T-cell (primary cell): ENCODE measurements at regions of chr9 and their contacts with region 1.

Region 1: DNA sequence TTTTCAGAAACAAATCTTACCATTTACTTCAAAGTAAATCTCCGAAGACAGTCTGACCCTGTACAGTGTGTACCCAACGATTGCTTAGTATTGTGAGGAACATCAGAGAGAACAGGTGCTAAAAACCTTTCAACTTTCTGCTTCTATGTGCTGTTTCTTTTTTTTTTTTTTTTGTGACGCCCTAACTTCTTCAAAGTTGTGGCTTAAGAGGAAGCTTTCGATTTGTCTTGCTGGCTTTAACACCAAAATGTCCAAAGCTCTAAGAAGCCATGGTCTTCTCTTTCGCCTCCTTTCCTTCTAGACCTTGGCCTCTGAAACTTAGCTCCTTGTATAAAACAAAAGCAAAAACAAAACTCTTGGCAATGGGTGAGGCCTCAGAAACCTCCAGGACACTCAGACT is 1.2 kb downstream of the TNFSF8 start:
- DNase-seq: peak in 13 of 35 experiments; percentile 6 to 68 (median 23)
- ATAC-seq: peak; percentile 44 to 84 (median 55)
- H3K4me3 ChIP-seq: peak overlapping the region; percentile 65 to 72
- H3K4me3 Mint-ChIP-seq: peak overlapping the region; percentile 88 to 91 (median 90)
- H3K27ac ChIP-seq: peak overlapping the region; percentile 93
- H3K27ac Mint-ChIP-seq: peak overlapping the region; percentile 95 to 96
- H3K4me1 ChIP-seq: peaks cover 26 to 36% of the 10 kb centered on the region in 2 experiments
- H3K4me1 Mint-ChIP-seq: peaks cover 63 to 66% (median 64%) of the 10 kb centered on the region in 3 donors
- H3K27me3 ChIP-seq: no peaks in the 10 kb centered on the region
- H3K27me3 Mint-ChIP-seq: no peaks in the 10 kb centered on the region

Region 2: GRCh38 chr9:114898741-114899140 is 30.5 kb before region 1 on chr9:
- CTCF ChIA-PET with region 1: interaction called in 1 of 2 experiments, 20 read pairs
- POLR2A ChIA-PET with region 1: interaction called, 9 to 13 read pairs
- DNase-seq: peak; percentile 65 to 91 (median 82)
- ATAC-seq: peak; percentile 94 to 97 (median 97)
- H3K4me3 ChIP-seq: peak overlapping the region in 1 of 2 donors; percentile 4
- H3K4me3 Mint-ChIP-seq: no peak overlapping the region
- H3K27ac ChIP-seq: peak overlapping the region; percentile 68
- H3K27ac Mint-ChIP-seq: no peak overlapping the region
- H3K4me1 ChIP-seq: peaks cover 38 to 83% of the 10 kb centered on the region in 2 experiments
- H3K4me1 Mint-ChIP-seq: peaks cover 0 to 24% (median 23%) of the 10 kb centered on the region in 3 donors
- H3K27me3 ChIP-seq: no peaks in the 10 kb centered on the region
- H3K27me3 Mint-ChIP-seq: no peaks in the 10 kb centered on the region

Region 3: DNA sequence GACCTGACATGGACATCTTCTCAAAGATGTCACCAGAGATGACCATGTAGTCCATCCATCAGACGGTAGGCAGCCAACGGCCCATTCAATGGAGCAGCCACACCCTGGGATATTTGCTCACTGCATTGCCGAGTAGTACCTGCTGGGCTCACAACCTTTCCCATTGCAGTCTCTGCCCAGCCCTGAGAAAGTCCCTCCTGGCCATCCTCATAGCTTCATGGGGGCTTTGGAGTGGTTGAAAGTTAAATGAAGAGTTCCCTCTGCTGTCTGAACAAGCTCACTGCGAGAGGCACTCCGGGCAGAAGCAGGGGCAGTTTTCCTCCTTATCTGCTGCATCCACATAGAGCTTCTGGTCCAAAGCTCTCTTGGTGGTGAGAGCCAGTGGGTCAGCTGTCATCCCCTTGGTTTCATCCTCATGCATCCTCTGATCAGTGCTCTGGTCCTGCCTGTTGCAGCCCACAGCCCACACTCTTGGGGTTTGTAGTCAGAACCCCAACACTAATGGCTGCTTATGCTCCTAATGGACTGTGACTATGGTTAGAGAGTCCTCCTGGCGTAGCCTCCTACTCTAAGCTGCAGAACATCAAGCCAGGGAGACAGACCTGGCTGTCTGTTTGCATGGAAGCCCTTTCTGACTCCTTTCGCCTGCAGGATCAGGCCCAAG is 22.2 kb before region 1 on chr9:
- CTCF ChIA-PET with region 1: interaction called in 1 of 2 experiments, 10 read pairs
- POLR2A ChIA-PET with region 1: interaction called, 3 to 8 read pairs
- DNase-seq: peak in 3 of 35 experiments; percentile 23 to 59 (median 35)
- ATAC-seq: peak in 2 of 4 experiments; percentile 19 to 26
- H3K4me3 ChIP-seq: no peak overlapping the region
- H3K4me3 Mint-ChIP-seq: peak overlapping the region in 1 of 3 donors; percentile 75
- H3K27ac ChIP-seq: peak overlapping the region; percentile 81
- H3K27ac Mint-ChIP-seq: peak overlapping the region; percentile 98
- H3K4me1 ChIP-seq: peaks cover 24 to 71% of the 10 kb centered on the region in 2 experiments
- H3K4me1 Mint-ChIP-seq: peaks cover 53 to 64% (median 58%) of the 10 kb centered on the region in 3 donors
- H3K27me3 ChIP-seq: no peaks in the 10 kb centered on the region
- H3K27me3 Mint-ChIP-seq: no peaks in the 10 kb centered on the region

Region 4: DNA sequence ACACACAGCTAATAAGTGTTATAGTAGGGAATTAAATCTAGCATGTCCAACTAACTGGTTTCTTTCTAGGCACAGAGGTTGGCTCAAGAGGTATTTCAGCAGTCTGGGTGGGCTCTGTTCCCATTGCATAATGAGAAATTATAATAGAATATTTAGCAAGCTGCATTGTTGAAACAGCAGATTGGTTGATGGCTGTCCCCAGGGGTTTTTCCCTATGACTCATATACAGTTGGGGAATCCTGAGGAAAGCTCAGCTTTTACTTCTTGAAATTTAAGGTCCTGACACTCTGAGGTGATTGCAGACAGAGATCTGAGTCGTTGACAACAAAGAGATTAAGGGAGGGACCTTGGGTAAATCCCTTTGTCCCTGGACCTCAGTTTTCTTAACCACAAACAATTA is 39.5 kb after region 1 on chr9:
- CTCF ChIA-PET with region 1: interaction called in 1 of 2 experiments, 4 read pairs
- POLR2A ChIA-PET with region 1: interaction called in 1 of 2 experiments, 10 read pairs
- DNase-seq: peak in 1 of 35 experiments; percentile 34
- ATAC-seq: peak in 3 of 4 experiments; percentile 23 to 67 (median 30)
- H3K4me3 ChIP-seq: no peak overlapping the region
- H3K4me3 Mint-ChIP-seq: peak overlapping the region in 1 of 3 donors; percentile 2
- H3K27ac ChIP-seq: no peak overlapping the region
- H3K27ac Mint-ChIP-seq: no peak overlapping the region
- H3K4me1 ChIP-seq: peaks cover 3 to 6% of the 10 kb centered on the region in 2 experiments
- H3K4me1 Mint-ChIP-seq: peaks cover 18 to 25% (median 24%) of the 10 kb centered on the region in 3 donors
- H3K27me3 ChIP-seq: no peaks in the 10 kb centered on the region
- H3K27me3 Mint-ChIP-seq: peaks cover 0 to 3% of the 10 kb centered on the region in 2 donors

Region 5: GRCh38 chr9:115013998-115014397 is 84.8 kb after region 1 on chr9:
- CTCF ChIA-PET with region 1: interaction called in 1 of 2 experiments, 6 read pairs
- POLR2A ChIA-PET with region 1: interaction called in 1 of 2 experiments, 13 read pairs
- DNase-seq: peak; percentile 55 to 88 (median 74)
- ATAC-seq: peak; percentile 80 to 91 (median 88)
- H3K4me3 ChIP-seq: no peak overlapping the region
- H3K4me3 Mint-ChIP-seq: no peak overlapping the region
- H3K27ac ChIP-seq: no peak overlapping the region
- H3K27ac Mint-ChIP-seq: peak overlapping the region in 1 of 2 donors; percentile 28
- H3K4me1 ChIP-seq: peaks cover 0 to 5% of the 10 kb centered on the region in 2 experiments
- H3K4me1 Mint-ChIP-seq: peaks cover 17 to 19% (median 18%) of the 10 kb centered on the region in 3 donors
- H3K27me3 ChIP-seq: peaks cover 0 to 4% of the 10 kb centered on the region in 2 experiments
- H3K27me3 Mint-ChIP-seq: peaks cover 0 to 7% of the 10 kb centered on the region in 2 donors